PC-3 (cell line): ENCODE measurements at regions of chr15 and their contacts with region 1.

Region 1: GRCh38 chr15:90816401-90817119 is 51.8 kb upstream of the FURIN start:
- DNase-seq: no peak
- ATAC-seq: no peak
- H3K4me3 ChIP-seq: no peak overlapping the region
- H3K27ac ChIP-seq: no peak overlapping the region
- H3K4me1 ChIP-seq: no peaks in the 10 kb centered on the region
- H3K27me3 ChIP-seq: no peaks in the 10 kb centered on the region
- CTCF ChIP-seq: no peak

Region 2: GRCh38 chr15:90686435-90687218 is 129.9 kb before region 1 on chr15:
- CTCF ChIA-PET with region 1: interaction called, 15 read pairs
- POLR2A ChIA-PET with region 1: no interaction called
- intact Hi-C with region 1: no loop called
- DNase-seq: no peak
- ATAC-seq: no peak
- H3K4me3 ChIP-seq: no peak overlapping the region
- H3K27ac ChIP-seq: no peak overlapping the region
- H3K4me1 ChIP-seq: 0 out of 2 replicates have a peak, but pooled peaks cover under 1% of the 10 kb centered on the region
- H3K27me3 ChIP-seq: no peaks in the 10 kb centered on the region
- CTCF ChIP-seq: no peak

Region 3: GRCh38 chr15:90937898-90938660 is 121.5 kb after region 1 on chr15:
- CTCF ChIA-PET with region 1: no interaction called
- POLR2A ChIA-PET with region 1: no interaction called
- intact Hi-C with region 1: no loop called
- DNase-seq: no peak
- ATAC-seq: no peak
- H3K4me3 ChIP-seq: no peak overlapping the region
- H3K27ac ChIP-seq: no peak overlapping the region
- H3K4me1 ChIP-seq: peaks cover 14% of the 10 kb centered on the region
- H3K27me3 ChIP-seq: no peaks in the 10 kb centered on the region
- CTCF ChIP-seq: no peak

Region 4: GRCh38 chr15:91422704-91423254 is 606.2 kb after region 1 on chr15:
- CTCF ChIA-PET with region 1: no interaction called
- POLR2A ChIA-PET with region 1: no interaction called
- intact Hi-C with region 1: no loop called
- DNase-seq: no peak
- ATAC-seq: no peak
- H3K4me3 ChIP-seq: no peak overlapping the region
- H3K27ac ChIP-seq: no peak overlapping the region
- H3K4me1 ChIP-seq: no peaks in the 10 kb centered on the region
- H3K27me3 ChIP-seq: no peaks in the 10 kb centered on the region; the same call in 1 of the 2 replicates
- CTCF ChIP-seq: no peak